ENCODE measurements at regions of chr1 and their contacts with region 1.

Region 1: GRCh38 chr1:39091845-39092645 is 65.9 kb downstream of the NDUFS5 start:
- DNase-seq: peak; percentile 76
- H3K4me3 ChIP-seq: no peak overlapping the region
- H3K27ac ChIP-seq: no peak overlapping the region
- H3K4me1 ChIP-seq: no peaks in the 10 kb centered on the region
- H3K27me3 ChIP-seq: no peaks in the 10 kb centered on the region
- CTCF ChIP-seq: peak; percentile 64
- POLR2A ChIP-seq: no peak

Region 2: GRCh38 chr1:39081266-39082009 is 10.6 kb before region 1 on chr1:
- CTCF ChIA-PET with region 1: interaction called, 17 read pairs
- POLR2A ChIA-PET with region 1: interaction called, 12 read pairs
- dilution Hi-C with region 1: no loop called
- intact Hi-C with region 1: no loop called
- DNase-seq: no peak
- H3K4me3 ChIP-seq: peak overlapping the region; percentile 12 to 42 (median 32)
- H3K27ac ChIP-seq: no peak overlapping the region
- H3K4me1 ChIP-seq: no peaks in the 10 kb centered on the region
- H3K27me3 ChIP-seq: peaks cover 10 to 13% of the 10 kb centered on the region in 2 experiments
- CTCF ChIP-seq: no peak
- POLR2A ChIP-seq: no peak

Region 3: GRCh38 chr1:39317910-39318633 is 226.0 kb after region 1 on chr1:
- CTCF ChIA-PET with region 1: no interaction called
- POLR2A ChIA-PET with region 1: no interaction called
- dilution Hi-C with region 1: no loop called
- intact Hi-C with region 1: no loop called
- DNase-seq: peak; percentile 91
- H3K4me3 ChIP-seq: peak overlapping the region in 2 of 3 experiments; percentile 3 to 33
- H3K27ac ChIP-seq: peak overlapping the region; percentile 71
- H3K4me1 ChIP-seq: peaks cover 24% of the 10 kb centered on the region
- H3K27me3 ChIP-seq: no peaks in the 10 kb centered on the region
- CTCF ChIP-seq: no peak
- POLR2A ChIP-seq: peak; percentile 31